Heart right ventricle (tissue), 16 donors: ENCODE measurements at regions of chr13 and their contacts with region 1.

Region 1: GRCh38 chr13:79659121-79659521 is 178.2 kb downstream of the NDFIP2 start:
- DNase-seq: peak; percentile 43 to 59
- ATAC-seq: peak; percentile 81 to 96 (median 88)
- H3K4me3 ChIP-seq: no peak overlapping the region
- H3K27ac ChIP-seq: peak overlapping the region; percentile 29 to 89 (median 64)
- H3K4me1 ChIP-seq: peaks cover 6 to 45% (median 18%) of the 10 kb centered on the region in 9 donors
- H3K27me3 ChIP-seq: no peaks in the 10 kb centered on the region
- CTCF ChIP-seq: no peak

Region 2: DNA sequence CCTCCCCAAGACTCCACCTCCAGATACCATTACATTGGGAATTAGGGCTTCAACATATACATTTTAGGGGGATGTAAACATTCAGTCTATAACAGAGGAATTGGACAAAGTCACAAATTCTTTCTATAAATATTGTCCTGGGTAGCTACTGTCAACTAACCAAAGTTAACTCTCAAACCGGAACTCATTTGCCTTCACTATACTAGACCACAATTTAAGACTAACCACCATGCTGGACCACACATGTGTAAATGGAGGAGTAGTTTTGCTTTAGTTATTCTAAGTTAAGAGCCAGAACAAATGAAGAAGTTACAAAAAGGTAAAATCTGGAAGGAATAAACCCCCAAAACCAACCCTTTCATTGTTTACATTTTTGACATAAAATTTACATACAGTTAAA is 44.7 kb after region 1 on chr13:
- intact Hi-C with region 1: loop called in 1 of 10 experiments (anchors 1 kb)
- DNase-seq: no peak
- ATAC-seq: no peak
- H3K4me3 ChIP-seq: no peak overlapping the region
- H3K27ac ChIP-seq: no peak overlapping the region
- H3K4me1 ChIP-seq: no peaks in the 10 kb centered on the region
- H3K27me3 ChIP-seq: no peaks in the 10 kb centered on the region
- CTCF ChIP-seq: no peak